ENCODE measurements at regions of chr4 and their contacts with region 1.

Region 1: DNA sequence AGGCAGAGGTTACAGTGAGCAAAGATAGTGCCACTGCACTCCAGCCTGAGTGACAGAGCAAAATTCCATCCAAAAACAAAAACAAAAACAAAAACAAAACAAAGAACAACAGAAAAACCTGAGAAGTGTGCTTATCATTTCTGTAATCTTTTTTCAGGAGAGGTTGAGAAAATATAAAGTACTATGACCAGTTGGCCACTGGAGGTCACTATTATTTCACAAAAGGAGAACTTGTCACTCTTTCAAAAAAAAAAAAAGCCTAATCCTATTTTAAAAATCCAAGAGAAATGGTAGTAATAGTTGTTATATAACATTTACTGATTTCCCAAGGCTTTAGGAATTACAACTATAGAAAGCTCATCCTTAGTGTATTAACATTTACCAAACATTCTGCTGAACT is 24.9 kb upstream of the RNF150 start:
- DNase-seq: no peak
- H3K4me3 Mint-ChIP-seq: no peak overlapping the region
- H3K27ac Mint-ChIP-seq: no peak overlapping the region
- H3K4me1 Mint-ChIP-seq: no peaks in the 10 kb centered on the region
- H3K27me3 Mint-ChIP-seq: no peaks in the 10 kb centered on the region
- CTCF ChIP-seq: no peak

Region 2: DNA sequence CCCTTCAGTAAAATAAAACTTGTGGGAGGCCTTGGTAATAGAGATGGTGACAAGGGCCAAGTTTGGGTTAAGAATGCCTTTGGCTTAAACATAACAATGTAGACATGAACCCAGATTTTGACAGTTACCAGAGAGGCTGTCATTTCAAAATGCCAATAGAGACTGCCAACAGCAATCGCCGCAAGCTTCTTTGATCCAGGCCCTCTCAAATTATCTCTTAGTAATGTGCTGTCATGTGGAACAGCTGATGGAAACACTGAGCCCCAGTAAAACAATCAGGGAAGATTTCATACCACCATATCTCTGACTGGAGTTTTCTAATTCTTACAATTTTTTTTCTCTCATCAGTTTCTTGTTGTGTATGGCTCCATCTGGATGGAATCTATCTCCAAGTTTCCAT is 143.0 kb after region 1 on chr4:
- CTCF ChIA-PET with region 1: no interaction called
- intact Hi-C with region 1: loop called (anchors 5 kb)
- DNase-seq: no peak
- H3K4me3 Mint-ChIP-seq: no peak overlapping the region
- H3K27ac Mint-ChIP-seq: no peak overlapping the region
- H3K4me1 Mint-ChIP-seq: no peaks in the 10 kb centered on the region
- H3K27me3 Mint-ChIP-seq: no peaks in the 10 kb centered on the region
- CTCF ChIP-seq: no peak

Region 3: DNA sequence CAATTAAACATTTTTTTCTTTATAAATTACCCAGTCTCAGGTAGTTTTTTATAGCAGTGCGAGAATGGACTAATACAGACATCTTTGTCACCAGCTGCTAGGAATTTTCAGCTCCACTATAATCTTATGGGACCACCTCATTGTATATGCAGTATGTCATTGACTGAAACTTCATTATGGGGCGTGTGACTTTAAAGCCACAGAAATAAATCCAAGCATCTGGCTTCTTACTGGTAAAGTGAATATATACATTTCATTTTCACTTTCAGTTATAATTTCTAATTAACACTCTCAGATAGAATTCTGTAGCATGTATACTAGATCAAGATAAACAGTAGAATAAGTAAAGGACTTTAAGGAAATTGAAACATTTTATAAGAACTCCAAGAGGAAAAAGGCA is 500.1 kb after region 1 on chr4:
- CTCF ChIA-PET with region 1: no interaction called
- intact Hi-C with region 1: no loop called
- DNase-seq: no peak
- H3K4me3 Mint-ChIP-seq: no peak overlapping the region
- H3K27ac Mint-ChIP-seq: no peak overlapping the region
- H3K4me1 Mint-ChIP-seq: peaks cover 8% of the 10 kb centered on the region
- H3K27me3 Mint-ChIP-seq: no peaks in the 10 kb centered on the region
- CTCF ChIP-seq: no peak